ENCODE measurements at regions of chr3 and their contacts with region 1.

Region 1: DNA sequence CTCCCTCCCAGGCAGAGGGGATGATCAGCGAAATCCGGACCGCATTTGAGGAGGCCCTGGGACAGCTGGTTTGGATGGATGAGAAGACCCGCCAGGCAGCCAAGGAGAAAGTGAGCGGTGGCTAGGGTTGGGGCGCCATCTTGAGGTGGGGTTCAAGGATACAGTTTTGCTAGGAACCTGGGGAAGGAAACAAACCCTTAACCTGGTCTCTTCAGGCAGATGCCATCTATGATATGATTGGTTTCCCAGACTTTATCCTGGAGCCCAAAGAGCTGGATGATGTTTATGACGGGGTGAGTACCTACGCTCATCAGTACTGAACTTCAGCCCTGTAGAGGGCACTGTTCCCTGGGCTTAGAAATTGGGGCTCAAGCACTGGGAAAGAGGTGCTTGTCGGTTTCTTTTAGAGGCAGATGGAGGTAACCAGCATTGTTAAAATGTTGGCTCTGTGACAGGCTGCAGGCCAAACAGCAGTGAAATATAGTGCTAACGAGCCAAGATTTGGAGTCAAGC is 9.6 kb upstream of the PSMD2 start:
- DNase-seq: peak; percentile 43
- ATAC-seq: peak; percentile 83
- H3K4me3 ChIP-seq: no peak overlapping the region
- H3K27ac ChIP-seq: no peak overlapping the region
- H3K4me1 ChIP-seq: no peaks in the 10 kb centered on the region
- H3K27me3 ChIP-seq: no peaks in the 10 kb centered on the region
- CTCF ChIP-seq: peak; percentile 96

Region 2: DNA sequence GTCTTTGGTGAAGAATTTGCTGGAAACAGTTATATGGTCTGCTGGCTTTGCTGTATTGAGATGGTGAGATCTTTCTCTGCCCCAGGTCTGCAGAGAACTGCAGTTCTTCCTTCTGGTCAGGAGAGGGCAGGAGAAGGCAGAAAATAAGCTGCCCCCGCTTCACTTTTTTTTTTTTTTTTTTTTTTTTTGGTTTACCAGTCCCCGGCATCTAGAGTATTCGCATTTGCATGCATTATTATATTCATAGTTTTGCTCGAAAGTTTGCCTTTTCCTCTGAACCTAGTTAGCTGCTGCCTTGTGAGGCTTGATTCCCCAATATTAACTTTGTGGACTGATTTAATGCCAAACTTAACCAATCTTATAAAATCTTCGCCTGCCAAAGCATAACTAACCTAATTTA is 394.2 kb before region 1 on chr3:
- CTCF ChIA-PET with region 1: interaction called, 4 read pairs
- POLR2A ChIA-PET with region 1: no interaction called
- in situ Hi-C with region 1: no loop called
- intact Hi-C with region 1: loop called (anchors 5 kb)
- DNase-seq: peak; percentile 42
- ATAC-seq: peak; percentile 76
- H3K4me3 ChIP-seq: no peak overlapping the region
- H3K27ac ChIP-seq: no peak overlapping the region
- H3K4me1 ChIP-seq: no peaks in the 10 kb centered on the region
- H3K27me3 ChIP-seq: no peaks in the 10 kb centered on the region
- CTCF ChIP-seq: peak; percentile 92

Region 3: GRCh38 chr3:184040010-184040409 is 249.5 kb before region 1 on chr3:
- CTCF ChIA-PET with region 1: interaction called, 4 read pairs
- POLR2A ChIA-PET with region 1: no interaction called
- in situ Hi-C with region 1: no loop called
- intact Hi-C with region 1: loop called (anchors 2 kb)
- DNase-seq: no peak
- ATAC-seq: peak; percentile 97
- H3K4me3 ChIP-seq: no peak overlapping the region
- H3K27ac ChIP-seq: no peak overlapping the region
- H3K4me1 ChIP-seq: no peaks in the 10 kb centered on the region
- H3K27me3 ChIP-seq: 0 out of 2 replicates have a peak, but pooled peaks cover 1% of the 10 kb centered on the region
- CTCF ChIP-seq: peak; percentile 90

Region 4: DNA sequence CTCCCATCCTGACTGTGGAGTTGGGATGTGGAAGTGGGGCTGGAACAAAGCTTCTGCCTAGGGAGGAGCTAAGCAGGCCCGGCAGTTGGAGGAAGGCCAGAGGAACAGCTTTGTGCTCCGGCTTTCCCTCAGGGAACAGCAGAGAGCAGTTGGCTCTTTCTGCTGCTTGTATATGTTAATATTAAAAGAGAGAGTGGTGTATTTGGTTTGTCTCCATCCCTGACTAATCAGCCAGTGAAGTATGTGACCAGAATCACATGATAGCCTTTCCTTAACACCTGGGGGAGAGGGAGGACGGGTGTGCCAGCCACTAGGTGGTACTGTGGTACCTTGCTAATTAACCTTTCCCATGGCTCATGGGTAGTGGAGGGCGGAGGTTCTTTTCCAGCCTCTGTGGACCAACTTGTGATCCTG is 144.4 kb before region 1 on chr3:
- CTCF ChIA-PET with region 1: interaction called, 4 read pairs
- POLR2A ChIA-PET with region 1: no interaction called
- in situ Hi-C with region 1: no loop called
- intact Hi-C with region 1: loop called (anchors 10 kb)
- DNase-seq: no peak
- ATAC-seq: peak; percentile 81
- H3K4me3 ChIP-seq: no peak overlapping the region
- H3K27ac ChIP-seq: no peak overlapping the region
- H3K4me1 ChIP-seq: no peaks in the 10 kb centered on the region
- H3K27me3 ChIP-seq: no peaks in the 10 kb centered on the region
- CTCF ChIP-seq: peak; percentile 78

Region 5: DNA sequence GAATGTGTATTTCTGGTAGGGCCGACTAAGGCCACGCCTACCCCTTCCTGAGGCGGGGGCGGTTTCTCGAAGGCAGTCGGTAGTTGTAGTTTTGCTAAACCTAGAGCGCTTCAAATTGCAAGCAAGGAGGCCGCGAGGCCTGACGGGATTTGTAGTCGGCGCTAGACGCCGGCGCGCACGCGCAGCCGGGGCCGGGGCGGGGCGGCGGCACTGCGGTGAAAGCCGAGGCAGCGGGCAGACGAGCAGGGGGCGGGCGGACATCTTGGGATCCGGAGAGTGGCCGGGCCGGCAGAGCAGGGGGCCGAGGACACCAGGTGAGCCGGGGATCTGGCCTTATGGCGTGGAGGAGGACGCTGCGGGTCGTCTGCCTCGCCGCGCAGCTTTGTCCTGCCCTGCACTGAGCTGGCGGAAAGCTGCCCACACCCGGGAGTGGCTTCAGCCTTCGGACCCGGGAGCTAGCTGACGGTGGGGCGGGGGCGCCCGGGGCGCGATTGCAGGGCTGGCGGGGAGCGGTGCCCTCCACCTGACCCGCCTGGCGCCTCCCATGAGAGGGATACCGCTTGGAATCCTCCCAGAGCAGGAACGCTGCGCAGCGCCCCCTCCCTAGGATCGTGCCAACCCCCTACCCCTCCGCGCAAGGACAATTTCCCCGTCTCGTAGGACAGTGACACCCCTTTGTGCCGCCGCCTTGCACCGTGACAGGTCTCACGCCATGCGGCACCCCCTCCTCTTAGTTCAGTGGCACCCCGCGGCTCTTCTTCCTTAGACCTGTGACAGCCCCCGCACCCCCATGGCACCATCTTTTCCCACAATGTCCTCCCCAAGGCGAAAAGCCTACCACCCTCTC is 114.6 kb before region 1 on chr3 and contains the start of gene AP2M1:
- CTCF ChIA-PET with region 1: no interaction called
- POLR2A ChIA-PET with region 1: interaction called, 12 read pairs
- in situ Hi-C with region 1: no loop called
- intact Hi-C with region 1: no loop called
- DNase-seq: peak; percentile 94
- ATAC-seq: peak; percentile 93
- H3K4me3 ChIP-seq: peak within 1 kb of the TSS; percentile 80 to 86
- H3K27ac ChIP-seq: peak within 1 kb of the TSS; percentile 88
- H3K4me1 ChIP-seq: peaks cover 18% of the 10 kb centered on the region
- H3K27me3 ChIP-seq: no peaks in the 10 kb centered on the region
- CTCF ChIP-seq: no peak
- total RNA-seq, gene AP2M1: 335 TPM